ENCODE measurements at regions of chr16 and their contacts with region 1.

Region 1: GRCh38 chr16:733382-734207 is 6.7 kb downstream of the HAGHL start:
- DNase-seq: peak in 1 of 2 experiments; percentile 78
- H3K4me3 ChIP-seq: no peak overlapping the region
- H3K4me1 ChIP-seq: peaks cover 5% of the 10 kb centered on the region
- H3K27me3 ChIP-seq: no peaks in the 10 kb centered on the region

Region 2: DNA sequence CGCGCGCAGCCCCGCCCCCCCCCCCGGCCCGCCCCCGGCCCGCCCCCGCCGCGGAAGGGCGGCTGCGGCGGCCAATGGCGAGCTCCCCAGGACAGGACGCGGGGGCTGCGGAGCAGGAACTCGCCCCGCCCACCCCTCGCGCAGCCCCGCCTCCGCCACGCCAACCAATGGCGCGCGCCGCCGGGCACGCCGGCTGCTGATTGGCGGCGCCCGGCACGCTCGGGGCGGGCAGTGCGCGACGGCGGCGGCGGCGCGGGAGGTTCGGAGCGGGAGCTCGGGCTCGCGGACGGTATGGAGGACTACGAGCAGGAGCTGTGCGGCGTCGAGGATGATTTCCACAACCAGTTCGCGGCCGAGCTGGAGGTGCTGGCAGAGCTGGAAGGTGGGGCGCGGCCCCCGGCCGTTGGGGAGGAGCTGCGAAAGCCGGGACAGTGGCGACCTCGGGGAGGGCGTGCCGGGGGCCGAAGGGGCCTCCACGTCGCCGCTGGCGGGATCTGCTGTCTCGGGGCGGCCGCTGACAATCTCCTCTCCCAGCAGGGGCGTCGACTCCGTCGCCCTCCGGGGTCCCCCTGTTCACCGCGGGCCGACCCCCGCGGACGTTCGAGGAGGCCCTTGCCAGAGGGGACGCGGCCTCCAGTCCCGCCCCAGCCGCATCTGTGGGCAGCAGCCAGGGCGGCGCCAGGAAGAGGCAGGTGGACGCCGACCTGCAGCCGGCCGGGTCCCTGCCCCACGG is 55.0 kb after region 1 on chr16 and contains the start of gene CHTF18:
- in situ Hi-C with region 1: loop called (anchors 5 kb)
- DNase-seq: peak; percentile 80 to 94
- H3K4me3 ChIP-seq: peak within 1 kb of the TSS; percentile 95
- H3K4me1 ChIP-seq: no peaks in the 10 kb centered on the region
- H3K27me3 ChIP-seq: no peaks in the 10 kb centered on the region

Measured in HAP-1 (cell line).